ENCODE measurements at regions of chr19 and their contacts with region 1.

Region 1: GRCh38 chr19:34974646-34975045 is 10.6 kb upstream of the ZNF792 start:
- DNase-seq: no peak
- H3K4me3 ChIP-seq: no peak overlapping the region
- H3K27ac ChIP-seq: no peak overlapping the region
- H3K4me1 ChIP-seq: no peaks in the 10 kb centered on the region
- H3K27me3 ChIP-seq: peaks cover 44% of the 10 kb centered on the region
- CTCF ChIP-seq: no peak

Region 2: GRCh38 chr19:35013031-35013819 is 38.6 kb after region 1 on chr19:
- CTCF ChIA-PET with region 1: no interaction called
- POLR2A ChIA-PET with region 1: no interaction called
- intact Hi-C with region 1: loop called (anchors 1 kb)
- DNase-seq: peak in 1 of 2 experiments; percentile 48
- H3K4me3 ChIP-seq: no peak overlapping the region
- H3K27ac ChIP-seq: no peak overlapping the region
- H3K4me1 ChIP-seq: no peaks in the 10 kb centered on the region
- H3K27me3 ChIP-seq: no peaks in the 10 kb centered on the region
- CTCF ChIP-seq: peak; percentile 93

Region 3: DNA sequence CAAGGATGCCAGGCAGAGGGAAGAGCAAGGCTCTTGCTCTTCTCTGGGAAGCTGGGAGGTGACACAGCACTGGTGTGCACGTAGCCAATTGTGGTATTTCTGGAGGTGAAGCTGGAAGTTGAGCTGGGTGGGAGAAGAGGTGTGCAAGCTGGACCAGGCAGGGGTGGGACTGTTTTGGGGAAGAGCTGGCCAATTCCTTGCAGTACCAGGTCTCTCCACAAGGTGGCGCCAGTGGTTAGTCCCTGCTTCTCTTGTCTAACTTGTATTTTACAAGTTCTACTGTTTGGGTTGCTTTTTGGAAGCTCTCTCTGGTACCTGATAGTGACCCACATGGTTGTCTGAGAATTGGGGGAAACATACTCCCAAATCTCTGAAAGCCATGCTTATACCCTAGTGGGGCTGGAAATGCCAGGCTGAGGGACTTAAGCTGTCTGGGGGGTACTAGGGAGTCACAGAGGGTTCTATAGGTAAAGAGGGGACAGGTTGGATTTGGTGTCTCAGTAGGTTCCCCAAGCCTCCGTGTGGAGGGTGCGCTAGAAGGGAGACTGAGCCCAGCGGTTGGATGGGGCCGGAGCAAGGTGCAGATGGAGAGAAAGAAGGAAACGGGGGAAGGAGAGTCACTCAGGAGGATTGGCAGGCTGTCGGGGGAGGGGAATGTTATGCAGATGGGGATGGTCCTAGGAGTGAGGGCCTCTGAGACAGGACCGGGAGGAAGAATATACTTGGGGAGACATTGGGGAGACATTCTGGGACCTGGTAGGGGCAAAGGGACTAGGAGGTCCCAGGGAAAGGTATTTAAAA is 69.9 kb after region 1 on chr19:
- CTCF ChIA-PET with region 1: no interaction called
- POLR2A ChIA-PET with region 1: no interaction called
- intact Hi-C with region 1: loop called (anchors 1 kb)
- DNase-seq: peak in 1 of 2 experiments; percentile 66
- H3K4me3 ChIP-seq: no peak overlapping the region
- H3K27ac ChIP-seq: no peak overlapping the region
- H3K4me1 ChIP-seq: peaks cover 8% of the 10 kb centered on the region; the same call in 1 of the 2 replicates
- H3K27me3 ChIP-seq: no peaks in the 10 kb centered on the region
- CTCF ChIP-seq: peak; percentile 99

Region 4: GRCh38 chr19:35090506-35091237 is 116.0 kb after region 1 on chr19:
- CTCF ChIA-PET with region 1: interaction called, 5 read pairs
- POLR2A ChIA-PET with region 1: no interaction called
- intact Hi-C with region 1: loop called (anchors 1 kb)
- DNase-seq: peak in 1 of 2 experiments; percentile 50
- H3K4me3 ChIP-seq: peak overlapping the region; percentile 26; the same call in 1 of the 2 replicates
- H3K27ac ChIP-seq: no peak overlapping the region
- H3K4me1 ChIP-seq: 0 out of 2 replicates have a peak, but pooled peaks cover 4% of the 10 kb centered on the region
- H3K27me3 ChIP-seq: no peaks in the 10 kb centered on the region
- CTCF ChIP-seq: peak; percentile 82

Region 5: GRCh38 chr19:35114353-35115176 is 139.9 kb after region 1 on chr19:
- CTCF ChIA-PET with region 1: no interaction called
- POLR2A ChIA-PET with region 1: no interaction called
- intact Hi-C with region 1: loop called (anchors 10 kb)
- DNase-seq: peak; percentile 59 to 81
- H3K4me3 ChIP-seq: peak overlapping the region; percentile 89
- H3K27ac ChIP-seq: peak overlapping the region; percentile 71
- H3K4me1 ChIP-seq: peaks cover 51% of the 10 kb centered on the region
- H3K27me3 ChIP-seq: no peaks in the 10 kb centered on the region
- CTCF ChIP-seq: peak; percentile 100

Region 6: GRCh38 chr19:35134601-35135242 is 160.1 kb after region 1 on chr19 and contains the start of gene LGI4:
- CTCF ChIA-PET with region 1: no interaction called
- POLR2A ChIA-PET with region 1: no interaction called
- intact Hi-C with region 1: no loop called
- DNase-seq: no peak
- H3K4me3 ChIP-seq: no peak within 1 kb of the TSS
- H3K27ac ChIP-seq: no peak within 1 kb of the TSS
- H3K4me1 ChIP-seq: peaks cover 8% of the 10 kb centered on the region; the same call in 1 of the 2 replicates
- H3K27me3 ChIP-seq: no peaks in the 10 kb centered on the region
- CTCF ChIP-seq: no peak
- total RNA-seq, gene LGI4: 1.2 and 1.3 TPM in 2 replicates

Measured in PC-9 (cell line).